CD14-positive monocyte (primary cell): ENCODE measurements at regions of chr19 and their contacts with region 1.

Region 1: GRCh38 chr19:49640113-49640898 is at the start of gene RRAS:
- DNase-seq: peak; percentile 100
- H3K4me3 ChIP-seq: peak within 1 kb of the TSS; percentile 58 to 99 (median 86)
- H3K4me3 Mint-ChIP-seq: peak within 1 kb of the TSS; percentile 95 to 99
- H3K27ac ChIP-seq: peak within 1 kb of the TSS; percentile 94 to 98
- H3K27ac Mint-ChIP-seq: peak within 1 kb of the TSS; percentile 99 to 100 (median 100)
- H3K4me1 ChIP-seq: peaks cover 45 to 51% of the 10 kb centered on the region in 2 donors
- H3K4me1 Mint-ChIP-seq: peaks cover 51% of the 10 kb centered on the region
- H3K27me3 ChIP-seq: no peaks in the 10 kb centered on the region
- H3K27me3 Mint-ChIP-seq: peaks cover 3 to 19% (median 13%) of the 10 kb centered on the region in 3 donors
- CTCF ChIP-seq: no peak
- polyA plus RNA-seq, gene RRAS: 74.9 to 91.7 (median 80.0) TPM

Region 2: GRCh38 chr19:49497047-49497788 is 143.1 kb before region 1 on chr19:
- intact Hi-C with region 1: loop called in 1 of 2 experiments (anchors 5 kb)
- DNase-seq: peak; percentile 89 to 93 (median 91)
- H3K4me3 ChIP-seq: peak overlapping the region; percentile 84 to 98 (median 86)
- H3K4me3 Mint-ChIP-seq: peak overlapping the region; percentile 91 to 94
- H3K27ac ChIP-seq: peak overlapping the region; percentile 92 to 95
- H3K27ac Mint-ChIP-seq: peak overlapping the region; percentile 95 to 99 (median 97)
- H3K4me1 ChIP-seq: peaks cover 47 to 52% of the 10 kb centered on the region in 2 donors
- H3K4me1 Mint-ChIP-seq: peaks cover 40% of the 10 kb centered on the region
- H3K27me3 ChIP-seq: no peaks in the 10 kb centered on the region
- H3K27me3 Mint-ChIP-seq: peaks cover 9 to 18% (median 12%) of the 10 kb centered on the region in 3 donors
- CTCF ChIP-seq: no peak

Region 3: GRCh38 chr19:49590071-49590970 is 50.0 kb before region 1 on chr19:
- intact Hi-C with region 1: loop called (anchors 2 to 5 kb)
- DNase-seq: peak; percentile 85 to 91 (median 88)
- H3K4me3 ChIP-seq: peak overlapping the region; percentile 64 to 98 (median 95)
- H3K4me3 Mint-ChIP-seq: peak overlapping the region; percentile 86 to 92
- H3K27ac ChIP-seq: peak overlapping the region; percentile 93 to 94
- H3K27ac Mint-ChIP-seq: peak overlapping the region; percentile 88 to 94 (median 92)
- H3K4me1 ChIP-seq: peaks cover 28 to 37% of the 10 kb centered on the region in 2 donors
- H3K4me1 Mint-ChIP-seq: peaks cover 30% of the 10 kb centered on the region
- H3K27me3 ChIP-seq: no peaks in the 10 kb centered on the region
- H3K27me3 Mint-ChIP-seq: peaks cover 3 to 10% (median 5%) of the 10 kb centered on the region in 3 donors
- CTCF ChIP-seq: no peak

Region 4: GRCh38 chr19:49601482-49602038 is 38.7 kb before region 1 on chr19:
- intact Hi-C with region 1: no loop called
- DNase-seq: no peak
- H3K4me3 ChIP-seq: no peak overlapping the region
- H3K4me3 Mint-ChIP-seq: no peak overlapping the region
- H3K27ac ChIP-seq: no peak overlapping the region
- H3K27ac Mint-ChIP-seq: no peak overlapping the region
- H3K4me1 ChIP-seq: no peaks in the 10 kb centered on the region
- H3K4me1 Mint-ChIP-seq: peaks cover 7% of the 10 kb centered on the region
- H3K27me3 ChIP-seq: no peaks in the 10 kb centered on the region
- H3K27me3 Mint-ChIP-seq: peaks cover 0 to 3% (median 0%) of the 10 kb centered on the region in 3 donors
- CTCF ChIP-seq: no peak

Region 5: DNA sequence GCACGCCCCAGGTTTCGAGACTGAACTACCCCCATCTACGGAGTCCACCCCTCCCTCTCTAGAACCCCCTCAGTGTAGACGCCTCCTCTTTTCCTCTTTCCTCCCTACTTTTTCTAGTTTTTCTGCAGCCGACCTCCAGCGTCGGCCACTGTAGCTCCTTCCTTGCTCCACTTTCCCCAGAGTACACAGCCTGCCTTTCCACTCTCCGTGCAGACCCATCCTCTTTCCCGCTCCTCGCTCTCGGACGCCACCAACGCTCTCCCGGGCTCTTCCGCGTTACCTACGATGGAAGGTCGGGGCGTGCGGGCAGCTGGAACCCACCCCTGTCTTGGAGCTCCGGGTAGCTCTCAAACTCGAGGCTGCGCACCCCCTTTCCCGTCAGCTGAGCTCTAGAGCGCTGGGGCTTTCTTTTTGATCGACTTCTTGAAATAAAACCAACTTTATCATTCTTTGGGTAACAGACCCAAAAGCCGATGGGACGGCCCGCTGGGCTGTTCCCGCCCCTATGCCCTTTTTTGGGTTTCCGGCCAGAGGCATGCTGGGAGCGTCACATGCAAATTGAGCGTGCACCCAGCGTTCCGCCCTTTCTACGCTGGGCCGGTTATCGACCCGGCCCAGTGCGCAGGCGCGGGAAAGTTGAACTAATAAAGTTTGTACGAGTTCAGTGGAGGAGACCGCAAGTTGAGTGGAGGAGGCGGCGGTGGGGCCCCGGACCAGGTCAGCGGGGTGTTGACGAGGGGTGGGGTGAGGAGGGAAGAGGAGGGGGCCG is 25.2 kb after region 1 on chr19 and contains the starts of genes BCL2L12 and IRF3:
- intact Hi-C with region 1: loop called in 1 of 2 experiments (anchors 1 kb)
- DNase-seq: peak; percentile 95 to 97 (median 95)
- H3K4me3 ChIP-seq: peak within 1 kb of the TSS; percentile 52 to 94 (median 72)
- H3K4me3 Mint-ChIP-seq: peak within 1 kb of the TSS; percentile 97 to 100
- H3K27ac ChIP-seq: peak within 1 kb of the TSS; percentile 52 to 78
- H3K27ac Mint-ChIP-seq: peak within 1 kb of the TSS; percentile 89 to 99 (median 94)
- H3K4me1 ChIP-seq: peaks cover 17 to 35% of the 10 kb centered on the region in 2 donors
- H3K4me1 Mint-ChIP-seq: peaks cover 32% of the 10 kb centered on the region
- H3K27me3 ChIP-seq: no peaks in the 10 kb centered on the region
- H3K27me3 Mint-ChIP-seq: no peaks in the 10 kb centered on the region
- CTCF ChIP-seq: no peak
- polyA plus RNA-seq, gene BCL2L12: 5.7 to 10.3 (median 8.6) TPM
- polyA plus RNA-seq, gene IRF3: 29.8 to 115 (median 41.1) TPM

Region 6: GRCh38 chr19:49676690-49677231 is 36.5 kb after region 1 on chr19:
- intact Hi-C with region 1: loop called (anchors 2 to 5 kb)
- DNase-seq: peak; percentile 99 to 100 (median 100)
- H3K4me3 ChIP-seq: peak overlapping the region; percentile 92 to 98 (median 93)
- H3K4me3 Mint-ChIP-seq: peak overlapping the region; percentile 96
- H3K27ac ChIP-seq: peak overlapping the region; percentile 91 to 98
- H3K27ac Mint-ChIP-seq: peak overlapping the region; percentile 98 to 100 (median 100)
- H3K4me1 ChIP-seq: peaks cover 29 to 38% of the 10 kb centered on the region in 2 donors
- H3K4me1 Mint-ChIP-seq: peaks cover 25% of the 10 kb centered on the region
- H3K27me3 ChIP-seq: no peaks in the 10 kb centered on the region
- H3K27me3 Mint-ChIP-seq: peaks cover 0 to 5% (median 0%) of the 10 kb centered on the region in 3 donors
- CTCF ChIP-seq: no peak

Region 7: GRCh38 chr19:49766007-49766937 is 126.0 kb after region 1 on chr19:
- intact Hi-C with region 1: loop called in 1 of 2 experiments (anchors 2 kb)
- DNase-seq: peak; percentile 100
- H3K4me3 ChIP-seq: peak overlapping the region; percentile 33 to 74 (median 47)
- H3K4me3 Mint-ChIP-seq: peak overlapping the region; percentile 85 to 95
- H3K27ac ChIP-seq: peak overlapping the region; percentile 89 to 92
- H3K27ac Mint-ChIP-seq: peak overlapping the region; percentile 95 to 99 (median 98)
- H3K4me1 ChIP-seq: peaks cover 29 to 30% of the 10 kb centered on the region in 2 donors
- H3K4me1 Mint-ChIP-seq: peaks cover 42% of the 10 kb centered on the region
- H3K27me3 ChIP-seq: no peaks in the 10 kb centered on the region
- H3K27me3 Mint-ChIP-seq: peaks cover 1 to 2% (median 2%) of the 10 kb centered on the region in 3 donors
- CTCF ChIP-seq: no peak

Region 8: GRCh38 chr19:49817964-49818648 is 177.8 kb after region 1 on chr19 and contains the start of gene MED25:
- intact Hi-C with region 1: no loop called
- DNase-seq: peak; percentile 81 to 89 (median 83)
- H3K4me3 ChIP-seq: peak within 1 kb of the TSS; percentile 70 to 100 (median 89)
- H3K4me3 Mint-ChIP-seq: peak within 1 kb of the TSS; percentile 96 to 100
- H3K27ac ChIP-seq: peak within 1 kb of the TSS; percentile 75 to 93
- H3K27ac Mint-ChIP-seq: peak within 1 kb of the TSS; percentile 97 to 100 (median 99)
- H3K4me1 ChIP-seq: peaks cover 23 to 27% of the 10 kb centered on the region in 2 donors
- H3K4me1 Mint-ChIP-seq: peaks cover 22% of the 10 kb centered on the region
- H3K27me3 ChIP-seq: no peaks in the 10 kb centered on the region
- H3K27me3 Mint-ChIP-seq: peaks cover 0 to 8% (median 0%) of the 10 kb centered on the region in 3 donors
- CTCF ChIP-seq: peak; percentile 23
- polyA plus RNA-seq, gene MED25: 13.9 to 52.9 (median 18.5) TPM

Region 9: GRCh38 chr19:49877020-49877878 is 236.9 kb after region 1 on chr19 and contains the starts of genes AKT1S1 and TBC1D17:
- intact Hi-C with region 1: loop called in 1 of 2 experiments (anchors 2 kb)
- DNase-seq: peak; percentile 100
- H3K4me3 ChIP-seq: peak within 1 kb of the TSS; percentile 66 to 94 (median 88)
- H3K4me3 Mint-ChIP-seq: no peak within 1 kb of the TSS
- H3K27ac ChIP-seq: peak within 1 kb of the TSS; percentile 90 to 95
- H3K27ac Mint-ChIP-seq: no peak within 1 kb of the TSS
- H3K4me1 ChIP-seq: peaks cover 25 to 28% of the 10 kb centered on the region in 2 donors
- H3K4me1 Mint-ChIP-seq: peaks cover 25% of the 10 kb centered on the region
- H3K27me3 ChIP-seq: no peaks in the 10 kb centered on the region
- H3K27me3 Mint-ChIP-seq: peaks cover 0 to 1% (median 0%) of the 10 kb centered on the region in 3 donors
- CTCF ChIP-seq: no peak
- polyA plus RNA-seq, gene AKT1S1: 5.4 to 18.2 (median 6.6) TPM
- polyA plus RNA-seq, gene TBC1D17: 3.1 to 48.2 (median 4.5) TPM